ENCODE measurements at regions of chr6 and their contacts with region 1.

Region 1: DNA sequence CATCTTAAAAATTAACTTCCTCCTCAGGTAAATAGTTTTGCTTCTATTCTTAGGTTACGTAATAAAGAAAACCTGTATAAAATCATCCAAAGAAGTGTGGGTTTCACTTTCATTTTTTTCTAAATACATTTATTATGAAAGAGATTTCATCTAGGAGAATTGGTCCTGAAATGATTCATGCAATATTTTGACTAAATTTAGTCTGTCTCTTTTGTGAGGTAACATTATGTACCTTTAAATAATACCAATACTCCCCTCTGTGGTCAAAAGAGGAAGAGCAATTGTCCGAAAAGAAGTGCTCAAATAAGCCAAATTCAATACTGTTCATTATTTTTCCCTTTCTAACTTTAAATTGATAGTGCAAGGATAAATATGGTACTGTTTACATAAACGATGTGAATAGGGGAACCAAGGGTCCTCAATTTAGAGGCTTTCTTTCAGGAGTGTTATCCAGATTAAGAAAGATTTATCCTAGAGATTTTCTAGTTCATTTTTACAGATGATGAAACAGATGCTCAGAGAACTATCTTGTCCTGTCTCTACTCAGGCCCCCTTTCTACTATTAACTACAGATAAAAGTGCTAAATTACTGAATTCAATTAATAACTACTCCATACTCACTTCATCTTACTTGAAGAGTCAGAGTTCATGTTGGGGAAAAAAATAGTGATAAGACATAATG is 26.2 kb downstream of the CYP39A1 start:
- DNase-seq: peak; percentile 79
- H3K4me3 ChIP-seq: peak overlapping the region; percentile 50
- H3K27ac ChIP-seq: peak overlapping the region; percentile 94
- H3K4me1 ChIP-seq: peaks cover 66% of the 10 kb centered on the region
- CTCF ChIP-seq: peak; percentile 86

Region 2: GRCh38 chr6:46419576-46420002 is 206.8 kb before region 1 on chr6:
- CTCF ChIA-PET with region 1: no interaction called
- POLR2A ChIA-PET with region 1: no interaction called
- intact Hi-C with region 1: loop called (anchors 1 kb)
- DNase-seq: peak; percentile 77
- H3K4me3 ChIP-seq: no peak overlapping the region
- H3K27ac ChIP-seq: no peak overlapping the region
- H3K4me1 ChIP-seq: no peaks in the 10 kb centered on the region
- CTCF ChIP-seq: peak; percentile 92

Region 3: DNA sequence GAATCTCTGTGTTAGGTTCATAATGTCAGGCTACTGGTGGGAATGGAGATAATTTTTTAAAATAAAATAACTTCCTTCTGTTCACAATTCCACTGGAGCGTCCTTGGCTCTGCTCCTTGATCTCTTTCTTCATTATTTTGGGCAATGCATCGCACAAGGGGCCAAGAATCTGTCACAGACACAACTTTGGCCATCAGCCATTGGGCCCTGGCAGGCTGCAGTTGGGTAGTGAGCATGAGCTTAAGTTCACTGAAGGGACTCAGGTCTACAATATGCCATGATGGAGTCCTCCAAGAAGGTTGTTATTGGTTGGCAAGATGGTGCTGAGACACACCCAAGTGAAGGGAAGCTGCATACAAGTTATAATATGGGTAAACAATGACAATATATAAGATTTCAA is 13.7 kb before region 1 on chr6:
- CTCF ChIA-PET with region 1: no interaction called
- POLR2A ChIA-PET with region 1: interaction called, 18 read pairs
- intact Hi-C with region 1: no loop called
- DNase-seq: no peak
- H3K4me3 ChIP-seq: no peak overlapping the region
- H3K27ac ChIP-seq: no peak overlapping the region
- H3K4me1 ChIP-seq: no peaks in the 10 kb centered on the region
- CTCF ChIP-seq: no peak

Region 4: DNA sequence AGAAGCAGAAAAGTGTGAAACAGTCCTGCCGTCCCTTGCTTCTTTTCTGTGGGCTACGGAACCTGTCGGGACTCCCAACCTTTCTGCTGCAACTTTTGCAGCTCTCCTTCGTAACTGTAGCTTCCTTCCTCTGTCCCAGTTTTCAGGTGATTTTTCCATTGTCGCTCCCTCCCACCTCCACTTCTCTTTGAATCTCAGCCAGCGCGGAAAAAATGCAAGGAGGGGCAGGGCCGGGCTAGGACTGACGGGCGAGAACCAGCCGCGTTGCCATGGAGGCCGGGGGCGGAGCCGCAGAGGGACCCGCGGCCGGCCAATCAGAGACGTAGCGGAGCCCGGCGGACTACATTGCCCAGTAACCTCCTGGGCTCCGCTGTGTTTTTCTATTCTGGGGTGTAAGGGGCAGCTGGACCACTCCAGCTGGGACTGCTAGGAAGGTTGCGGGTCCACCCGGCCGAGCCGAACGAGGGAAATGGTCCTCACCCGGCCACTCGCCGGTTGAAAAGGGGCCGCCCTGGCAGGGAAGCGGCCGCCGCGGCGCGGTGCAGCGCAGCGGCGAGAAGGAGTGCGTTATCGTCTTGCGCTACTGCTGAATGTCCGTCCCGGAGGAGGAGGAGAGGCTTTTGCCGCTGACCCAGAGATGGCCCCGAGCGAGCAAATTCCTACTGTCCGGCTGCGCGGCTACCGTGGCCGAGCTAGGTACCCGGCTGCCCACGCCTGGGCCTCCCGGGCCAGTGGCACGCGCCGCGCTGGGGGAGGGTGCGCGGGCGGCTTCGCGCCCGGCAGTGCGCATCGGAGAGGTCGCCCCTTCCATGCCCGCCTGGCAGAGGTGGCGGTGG is 26.5 kb after region 1 on chr6 and contains the starts of genes CYP39A1 and SLC25A27:
- CTCF ChIA-PET with region 1: interaction called, 6 read pairs
- POLR2A ChIA-PET with region 1: interaction called, 21 read pairs
- intact Hi-C with region 1: loop called (anchors 1 kb)
- DNase-seq: peak; percentile 90
- H3K4me3 ChIP-seq: peak within 1 kb of the TSS; percentile 85
- H3K27ac ChIP-seq: peak within 1 kb of the TSS; percentile 96
- H3K4me1 ChIP-seq: peaks cover 10% of the 10 kb centered on the region
- CTCF ChIP-seq: no peak
- total RNA-seq, gene CYP39A1: 13.4 and 15.4 TPM in 2 replicates
- total RNA-seq, gene SLC25A27: 155 and 175 TPM in 2 replicates

Measured in OCI-LY7 (cell line).